Naive thymus-derived CD4-positive, alpha-beta T cell (primary cell): ENCODE measurements at regions of chr3 and their contacts with region 1.

Region 1: DNA sequence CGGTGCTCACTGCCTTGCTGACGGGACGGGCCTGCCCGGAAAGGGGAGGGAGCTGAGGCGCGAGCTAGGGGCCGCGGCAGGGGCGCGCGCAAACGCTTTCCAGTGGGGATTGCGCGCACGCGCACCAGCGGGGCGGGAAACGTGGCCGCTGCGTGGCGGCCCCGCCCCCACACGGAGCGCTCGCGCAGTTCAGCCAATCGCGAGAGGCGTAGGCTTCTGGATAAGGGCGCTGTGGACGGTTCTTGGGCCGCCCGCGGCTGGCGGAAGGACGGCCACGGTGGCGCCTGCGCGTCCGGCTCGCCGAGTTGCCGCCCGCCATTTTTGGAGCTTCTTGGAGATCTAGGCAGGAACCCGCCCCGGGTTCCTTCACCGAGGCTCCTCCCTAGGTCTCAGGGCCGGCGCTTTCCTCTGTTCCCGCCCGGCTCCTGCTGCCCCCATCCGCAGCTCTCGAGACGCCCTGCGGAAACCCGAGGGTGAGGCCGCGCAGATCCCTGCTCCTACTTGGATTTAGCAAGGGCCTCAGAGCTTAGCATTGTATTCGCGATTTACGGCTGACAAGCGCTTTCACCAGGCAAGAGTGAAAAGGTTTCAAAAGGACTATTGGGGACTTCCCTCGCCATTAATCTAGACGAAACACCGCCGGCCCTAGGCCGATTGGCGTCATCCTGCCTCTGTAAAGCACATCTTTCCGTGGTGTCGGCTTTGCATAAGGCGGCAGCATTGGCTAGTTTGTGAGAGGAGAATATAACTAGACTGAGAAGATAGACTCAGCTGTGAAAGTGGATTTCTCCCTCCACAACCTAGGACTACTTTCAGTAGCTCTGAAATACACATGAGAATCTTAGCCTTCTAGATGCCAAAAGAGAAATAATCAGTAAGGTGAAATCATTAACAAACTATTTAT is 496 bp upstream of the STAG1 start:
- DNase-seq: peak; percentile 95 to 99 (median 99)
- ATAC-seq: peak; percentile 91
- H3K4me3 ChIP-seq: peak overlapping the region; percentile 87
- H3K4me3 Mint-ChIP-seq: peak overlapping the region; percentile 68 to 99 (median 88)
- H3K27ac ChIP-seq: peak overlapping the region; percentile 95
- H3K27ac Mint-ChIP-seq: peak overlapping the region; percentile 80 to 98 (median 94)
- H3K4me1 ChIP-seq: peaks cover 20 to 27% of the 10 kb centered on the region in 2 donors
- H3K4me1 Mint-ChIP-seq: peaks cover 37 to 50% (median 43%) of the 10 kb centered on the region in 7 donors
- H3K27me3 ChIP-seq: no peaks in the 10 kb centered on the region
- H3K27me3 Mint-ChIP-seq: no peaks in the 10 kb centered on the region

Region 2: DNA sequence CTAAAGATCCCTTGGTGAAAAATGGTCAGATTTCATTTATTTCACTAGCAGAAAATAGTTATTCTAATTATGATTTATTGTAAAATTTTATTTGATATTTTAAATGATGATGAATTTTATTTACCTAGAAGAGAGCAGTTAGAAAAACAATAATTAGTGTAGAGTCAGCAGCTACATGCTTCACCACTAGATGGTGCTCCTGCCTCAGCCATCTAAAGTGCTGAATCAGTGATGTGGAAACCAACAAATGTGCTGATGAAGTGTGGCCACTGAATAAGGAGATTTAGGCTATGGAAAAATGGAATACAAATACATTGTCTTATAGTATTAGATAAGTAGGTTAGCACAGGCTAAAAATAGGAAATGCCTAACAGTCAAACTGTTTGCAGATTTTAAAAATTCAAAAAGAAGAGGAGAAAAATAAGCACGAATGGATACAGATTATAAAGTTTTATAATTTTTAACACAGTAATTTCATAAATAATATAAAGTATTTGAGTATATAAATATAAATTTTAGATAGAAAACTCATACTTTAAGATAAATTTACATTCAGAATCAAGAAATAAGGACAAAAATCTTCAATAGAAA is 677.4 kb before region 1 on chr3:
- CTCF ChIA-PET with region 1: interaction called, 14 read pairs
- POLR2A ChIA-PET with region 1: interaction called, 7 read pairs
- intact Hi-C with region 1: loop called (anchors 1 kb)
- DNase-seq: peak; percentile 38 to 73 (median 65)
- ATAC-seq: peak; percentile 88
- H3K4me3 ChIP-seq: no peak overlapping the region
- H3K4me3 Mint-ChIP-seq: no peak overlapping the region
- H3K27ac ChIP-seq: no peak overlapping the region
- H3K27ac Mint-ChIP-seq: peak overlapping the region in 1 of 9 donors; percentile 28
- H3K4me1 ChIP-seq: no peaks in the 10 kb centered on the region
- H3K4me1 Mint-ChIP-seq: peaks cover 0 to 5% (median 4%) of the 10 kb centered on the region in 7 donors
- H3K27me3 ChIP-seq: no peaks in the 10 kb centered on the region
- H3K27me3 Mint-ChIP-seq: peaks cover 0 to 6% (median 0%) of the 10 kb centered on the region in 5 donors

Region 3: DNA sequence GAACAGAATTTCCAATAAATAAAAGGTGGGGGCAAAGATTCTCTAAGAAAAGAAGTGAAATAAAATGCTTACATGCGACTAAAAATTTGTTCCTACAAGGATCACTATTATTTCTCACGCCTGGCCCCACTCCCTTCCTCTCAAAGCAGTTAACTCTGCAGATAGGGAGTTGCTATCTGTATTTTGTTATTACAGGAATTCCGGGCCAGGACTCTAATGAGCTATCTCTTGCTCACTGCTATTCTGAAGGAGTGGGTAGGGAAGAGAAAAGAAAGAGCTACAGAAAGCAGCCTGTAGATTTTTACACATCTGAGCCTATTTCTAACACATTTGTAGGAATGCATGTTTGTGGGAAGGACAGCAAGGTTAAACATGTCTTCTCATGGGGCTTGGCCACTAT is 362.1 kb before region 1 on chr3:
- CTCF ChIA-PET with region 1: interaction called, 24 read pairs
- POLR2A ChIA-PET with region 1: interaction called, 18 read pairs
- intact Hi-C with region 1: loop called (anchors 1 kb)
- DNase-seq: no peak
- ATAC-seq: no peak
- H3K4me3 ChIP-seq: no peak overlapping the region
- H3K4me3 Mint-ChIP-seq: no peak overlapping the region
- H3K27ac ChIP-seq: no peak overlapping the region
- H3K27ac Mint-ChIP-seq: no peak overlapping the region
- H3K4me1 ChIP-seq: no peaks in the 10 kb centered on the region
- H3K4me1 Mint-ChIP-seq: peaks cover 0 to 3% (median 0%) of the 10 kb centered on the region in 7 donors
- H3K27me3 ChIP-seq: no peaks in the 10 kb centered on the region
- H3K27me3 Mint-ChIP-seq: no peaks in the 10 kb centered on the region

Region 4: DNA sequence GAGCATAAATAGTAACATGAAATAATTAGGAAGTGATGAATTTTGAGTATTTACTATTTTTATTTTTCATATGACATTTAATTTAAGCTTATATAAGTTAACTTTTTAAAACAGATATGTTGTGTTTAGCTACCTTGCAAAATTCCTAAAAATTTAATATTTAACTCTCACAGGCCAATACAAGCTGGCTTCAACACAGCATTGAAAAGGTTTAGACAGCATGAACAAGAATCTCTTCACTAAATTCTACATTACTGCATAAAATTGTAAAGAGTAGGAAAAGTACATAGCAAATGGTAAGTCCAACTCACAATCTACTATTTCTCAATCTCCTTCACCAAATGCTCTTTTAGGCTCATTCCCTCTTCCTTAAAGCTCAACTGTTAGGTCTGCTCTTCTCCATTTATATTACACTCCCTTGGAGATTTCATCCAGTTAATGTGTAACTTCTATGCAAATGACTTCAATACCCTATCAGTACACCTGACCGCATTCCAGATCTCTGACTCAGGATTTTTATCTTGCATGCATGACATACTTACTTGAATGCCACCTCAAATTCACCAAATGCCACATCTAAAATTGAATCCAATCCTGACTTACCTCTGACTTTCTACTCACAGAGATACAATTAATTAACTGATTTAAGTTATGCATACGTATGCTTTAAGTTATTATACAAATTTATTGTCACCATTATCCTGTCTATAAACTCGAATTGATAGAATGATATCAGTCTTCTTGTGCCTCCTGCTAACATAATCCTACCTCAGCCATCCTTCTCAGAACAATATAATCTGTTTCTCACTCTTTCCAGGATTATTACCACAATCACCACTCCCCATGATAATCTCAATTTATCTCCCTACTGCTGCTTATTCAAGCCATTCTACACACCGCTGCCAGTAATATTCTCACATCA is 127.5 kb before region 1 on chr3:
- CTCF ChIA-PET with region 1: no interaction called
- POLR2A ChIA-PET with region 1: no interaction called
- intact Hi-C with region 1: loop called in 1 of 2 experiments (anchors 5 kb)
- DNase-seq: no peak
- ATAC-seq: no peak
- H3K4me3 ChIP-seq: no peak overlapping the region
- H3K4me3 Mint-ChIP-seq: no peak overlapping the region
- H3K27ac ChIP-seq: no peak overlapping the region
- H3K27ac Mint-ChIP-seq: no peak overlapping the region
- H3K4me1 ChIP-seq: no peaks in the 10 kb centered on the region
- H3K4me1 Mint-ChIP-seq: peaks cover 2 to 41% (median 24%) of the 10 kb centered on the region in 7 donors
- H3K27me3 ChIP-seq: no peaks in the 10 kb centered on the region
- H3K27me3 Mint-ChIP-seq: no peaks in the 10 kb centered on the region

Region 5: GRCh38 chr3:136919799-136920580 is 167.3 kb after region 1 on chr3:
- CTCF ChIA-PET with region 1: interaction called, 3 read pairs
- POLR2A ChIA-PET with region 1: interaction called, 3 read pairs
- intact Hi-C with region 1: loop called in 1 of 2 experiments (anchors 1 kb)
- DNase-seq: peak in 7 of 9 donors; percentile 8 to 51 (median 40)
- ATAC-seq: peak; percentile 94
- H3K4me3 ChIP-seq: no peak overlapping the region
- H3K4me3 Mint-ChIP-seq: peak overlapping the region in 8 of 10 donors; percentile 47 to 69 (median 60)
- H3K27ac ChIP-seq: peak overlapping the region; percentile 38
- H3K27ac Mint-ChIP-seq: peak overlapping the region in 6 of 9 donors; percentile 6 to 83 (median 70)
- H3K4me1 ChIP-seq: peaks cover 21 to 78% of the 10 kb centered on the region in 2 donors
- H3K4me1 Mint-ChIP-seq: peaks cover 60 to 94% (median 90%) of the 10 kb centered on the region in 7 donors
- H3K27me3 ChIP-seq: no peaks in the 10 kb centered on the region
- H3K27me3 Mint-ChIP-seq: no peaks in the 10 kb centered on the region

Region 6: GRCh38 chr3:138186803-138187295 is 1434.2 kb after region 1 on chr3:
- CTCF ChIA-PET with region 1: no interaction called
- POLR2A ChIA-PET with region 1: no interaction called
- intact Hi-C with region 1: loop called (anchors 5 to 10 kb)
- DNase-seq: peak; percentile 83 to 91 (median 87)
- ATAC-seq: peak; percentile 96
- H3K4me3 ChIP-seq: peak overlapping the region; percentile 98
- H3K4me3 Mint-ChIP-seq: peak overlapping the region; percentile 89 to 99 (median 97)
- H3K27ac ChIP-seq: peak overlapping the region; percentile 86
- H3K27ac Mint-ChIP-seq: peak overlapping the region; percentile 92 to 96 (median 93)
- H3K4me1 ChIP-seq: peaks cover 13 to 24% of the 10 kb centered on the region in 2 donors
- H3K4me1 Mint-ChIP-seq: peaks cover 32 to 54% (median 45%) of the 10 kb centered on the region in 7 donors
- H3K27me3 ChIP-seq: no peaks in the 10 kb centered on the region
- H3K27me3 Mint-ChIP-seq: peaks cover 0 to 19% (median 9%) of the 10 kb centered on the region in 5 donors